ENCODE measurements at regions of chr10 and their contacts with region 1.

Region 1: DNA sequence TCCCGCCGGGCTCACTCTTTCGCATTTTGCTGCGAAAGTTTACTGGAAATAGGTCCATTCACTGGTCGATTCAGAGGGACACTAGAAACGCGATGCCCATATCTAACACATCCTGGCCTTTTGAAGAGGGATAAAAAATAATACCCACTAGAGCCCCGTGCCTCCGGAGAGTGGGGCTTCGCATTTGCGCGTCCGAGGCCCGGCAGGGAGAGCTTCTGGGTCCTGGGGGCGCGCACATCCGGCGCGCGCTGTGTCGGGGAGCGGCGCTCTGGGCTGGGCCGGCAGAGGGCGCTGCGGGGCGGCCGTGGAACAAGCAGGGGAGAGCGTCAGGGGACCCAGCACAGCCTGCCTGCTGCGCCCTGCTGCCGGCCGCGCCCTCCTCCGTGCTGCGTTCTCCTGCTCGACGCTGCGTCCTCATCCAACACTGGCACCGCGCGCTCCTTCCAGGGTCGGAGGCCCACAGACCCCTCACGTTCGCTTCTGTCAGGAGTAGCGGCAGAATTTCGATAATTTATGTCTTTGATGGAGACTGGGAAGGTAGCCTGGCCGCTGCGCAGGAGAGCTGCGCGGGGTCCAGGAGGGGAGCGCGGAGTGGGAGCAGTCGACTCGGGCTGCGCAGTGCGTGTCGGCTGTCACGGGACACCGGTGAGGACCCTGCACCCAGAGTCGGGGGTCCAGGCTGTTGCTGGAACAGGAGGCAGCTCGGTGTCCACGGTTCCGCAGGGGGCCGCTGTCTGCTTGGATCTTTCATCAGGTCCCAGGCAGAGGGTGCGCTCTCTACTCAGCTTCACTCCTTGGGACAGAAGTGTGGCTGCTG is 41.5 kb upstream of the ZNF32 start:
- DNase-seq: peak; percentile 76 to 82
- ATAC-seq: peak; percentile 91 to 99
- H3K4me3 ChIP-seq: peak overlapping the region; percentile 54
- H3K27ac ChIP-seq: peak overlapping the region; percentile 68 to 83
- H3K4me1 ChIP-seq: no peaks in the 10 kb centered on the region
- CTCF ChIP-seq: peak; percentile 85
- EP300 ChIP-seq: no peak
- POLR2A ChIP-seq: no peak
- RAD21 ChIP-seq: peak; percentile 55 to 76

Region 2: DNA sequence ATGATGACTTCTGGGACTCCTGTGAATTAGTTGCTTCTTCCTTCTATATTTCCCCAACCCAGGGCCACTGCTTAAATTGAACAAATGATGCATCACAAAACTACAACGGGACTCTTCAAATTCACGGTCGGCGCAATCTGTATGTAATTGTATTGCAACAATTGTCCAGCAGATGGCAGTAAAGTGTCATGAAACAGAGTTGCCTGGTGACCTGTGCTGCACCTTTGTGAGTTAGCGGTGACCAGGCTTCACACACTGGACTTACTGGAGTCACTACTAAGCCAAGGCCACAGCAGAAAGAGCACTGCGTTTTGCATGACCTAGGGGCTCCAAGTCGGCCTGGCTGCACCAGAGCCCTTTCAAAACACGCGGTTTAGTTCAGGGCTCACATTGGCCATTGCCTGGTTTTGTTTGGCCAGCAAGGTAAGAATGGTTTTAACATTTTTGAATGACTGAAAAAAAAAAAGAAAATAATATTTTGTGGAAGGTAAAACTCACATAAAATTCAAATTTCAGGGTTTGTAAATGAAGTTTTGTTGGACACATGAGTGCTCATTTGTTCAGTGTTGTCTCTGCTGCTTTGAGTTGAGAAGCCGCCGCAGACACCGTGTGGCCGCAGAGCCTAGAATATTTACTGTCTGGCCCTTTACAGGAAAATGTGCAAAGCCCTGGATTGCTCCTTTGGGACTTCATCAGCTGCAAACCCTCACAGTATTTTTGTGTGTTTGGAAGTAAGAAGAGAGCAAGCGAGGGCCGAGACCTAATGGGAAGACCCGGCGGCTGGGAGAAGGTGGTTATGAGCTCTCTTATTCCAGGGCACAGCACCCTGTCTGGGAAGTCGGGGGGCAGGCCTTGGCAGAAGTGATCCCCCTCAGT is 18.3 kb before region 1 on chr10:
- CTCF ChIA-PET with region 1: interaction called, 16 read pairs
- POLR2A ChIA-PET with region 1: no interaction called
- DNase-seq: peak; percentile 70 to 80
- ATAC-seq: peak; percentile 65 to 85; a peak in 5 of 6 replicates
- H3K4me3 ChIP-seq: no peak overlapping the region
- H3K27ac ChIP-seq: no peak overlapping the region
- H3K4me1 ChIP-seq: no peaks in the 10 kb centered on the region
- CTCF ChIP-seq: peak; percentile 79
- EP300 ChIP-seq: no peak
- POLR2A ChIP-seq: no peak
- RAD21 ChIP-seq: peak; percentile 87 to 91

Region 3: DNA sequence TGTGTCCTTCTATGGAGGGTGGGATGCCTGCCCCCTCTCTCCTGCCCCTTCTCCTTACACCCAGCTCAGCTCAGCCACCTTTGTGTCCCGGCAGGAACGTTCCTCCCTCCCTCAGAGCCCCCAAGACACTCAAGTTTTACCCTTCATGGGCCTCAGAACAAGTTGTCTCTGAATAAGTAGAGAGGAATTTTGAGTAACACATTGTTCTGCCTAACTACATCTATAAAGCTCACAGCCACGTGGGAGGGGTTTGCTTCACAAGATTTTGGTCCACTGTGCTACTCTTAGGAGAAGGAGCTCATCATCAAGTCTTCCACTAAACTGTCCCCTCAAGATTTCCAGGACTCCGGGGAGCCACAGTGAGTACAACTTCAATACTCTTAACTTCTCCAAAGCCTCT is 10.1 kb after region 1 on chr10:
- CTCF ChIA-PET with region 1: interaction called, 24 read pairs
- POLR2A ChIA-PET with region 1: no interaction called
- DNase-seq: no peak
- ATAC-seq: no peak
- H3K4me3 ChIP-seq: no peak overlapping the region
- H3K27ac ChIP-seq: no peak overlapping the region
- H3K4me1 ChIP-seq: no peaks in the 10 kb centered on the region
- CTCF ChIP-seq: no peak
- EP300 ChIP-seq: no peak
- POLR2A ChIP-seq: no peak
- RAD21 ChIP-seq: no peak

Region 4: GRCh38 chr10:44386546-44387052 is 696.4 kb after region 1 on chr10:
- CTCF ChIA-PET with region 1: interaction called, 18 read pairs
- POLR2A ChIA-PET with region 1: interaction called, 4 read pairs
- DNase-seq: peak; percentile 48 to 57
- ATAC-seq: peak; percentile 89 to 98
- H3K4me3 ChIP-seq: no peak overlapping the region
- H3K27ac ChIP-seq: no peak overlapping the region
- H3K4me1 ChIP-seq: no peaks in the 10 kb centered on the region
- CTCF ChIP-seq: peak; percentile 69
- EP300 ChIP-seq: no peak
- POLR2A ChIP-seq: no peak
- RAD21 ChIP-seq: peak; percentile 71 to 86

Region 5: DNA sequence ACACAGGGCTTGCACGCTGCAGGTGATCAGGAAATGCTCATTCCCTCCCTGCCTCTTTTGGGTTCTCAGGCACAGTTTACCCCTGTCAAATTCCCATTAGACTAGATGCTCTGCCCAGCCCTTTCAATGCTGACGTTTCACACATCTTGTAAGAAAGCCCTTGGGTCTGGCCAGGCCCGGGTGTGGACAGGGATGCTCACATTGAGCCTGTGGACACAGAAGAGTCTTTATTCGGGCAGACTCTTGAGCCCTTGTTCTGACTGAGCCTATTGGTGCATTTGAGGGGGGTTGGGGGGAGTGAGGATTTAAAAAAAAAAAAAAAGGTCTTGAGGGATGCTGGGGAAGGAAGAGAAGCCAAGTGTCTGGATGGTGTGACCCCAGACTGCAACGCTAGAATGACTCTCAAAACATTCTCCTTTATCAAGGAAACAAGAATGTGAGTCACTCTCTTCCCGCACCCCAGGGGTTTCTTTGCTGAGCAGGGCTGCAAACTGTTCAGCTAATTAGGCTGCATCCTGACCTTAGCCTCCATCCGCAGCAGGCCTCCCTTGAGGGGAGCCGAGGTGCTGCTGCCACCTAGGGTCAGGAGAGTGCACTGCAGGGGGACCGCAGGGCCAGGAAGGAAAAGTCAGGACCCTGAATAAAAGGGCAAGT is 1167.3 kb after region 1 on chr10:
- CTCF ChIA-PET with region 1: interaction called, 11 read pairs
- POLR2A ChIA-PET with region 1: no interaction called
- DNase-seq: peak; percentile 41 to 55
- ATAC-seq: peak; percentile 44 to 83; a peak in 3 of 6 replicates
- H3K4me3 ChIP-seq: no peak overlapping the region
- H3K27ac ChIP-seq: no peak overlapping the region
- H3K4me1 ChIP-seq: no peaks in the 10 kb centered on the region
- CTCF ChIP-seq: peak; percentile 67
- EP300 ChIP-seq: no peak
- POLR2A ChIP-seq: no peak
- RAD21 ChIP-seq: peak; percentile 63 to 74

Region 6: GRCh38 chr10:44864637-44865288 is 1174.6 kb after region 1 on chr10:
- CTCF ChIA-PET with region 1: interaction called, 20 read pairs
- POLR2A ChIA-PET with region 1: no interaction called
- DNase-seq: peak; percentile 78 to 84
- ATAC-seq: peak; percentile 95 to 99
- H3K4me3 ChIP-seq: peak overlapping the region; percentile 54
- H3K27ac ChIP-seq: peak overlapping the region; percentile 57 to 72
- H3K4me1 ChIP-seq: peaks cover 7% of the 10 kb centered on the region; the same call in 2 of the 3 replicates
- CTCF ChIP-seq: peak; percentile 92
- EP300 ChIP-seq: no peak
- POLR2A ChIP-seq: 0 out of 2 replicates have a peak, but pooled peaks have one; percentile 8
- RAD21 ChIP-seq: peak; percentile 77 to 86

Measured in A549 (cell line).